HCT116 (cell line): ENCODE measurements at regions of chr7 and their contacts with region 1.

Region 1: DNA sequence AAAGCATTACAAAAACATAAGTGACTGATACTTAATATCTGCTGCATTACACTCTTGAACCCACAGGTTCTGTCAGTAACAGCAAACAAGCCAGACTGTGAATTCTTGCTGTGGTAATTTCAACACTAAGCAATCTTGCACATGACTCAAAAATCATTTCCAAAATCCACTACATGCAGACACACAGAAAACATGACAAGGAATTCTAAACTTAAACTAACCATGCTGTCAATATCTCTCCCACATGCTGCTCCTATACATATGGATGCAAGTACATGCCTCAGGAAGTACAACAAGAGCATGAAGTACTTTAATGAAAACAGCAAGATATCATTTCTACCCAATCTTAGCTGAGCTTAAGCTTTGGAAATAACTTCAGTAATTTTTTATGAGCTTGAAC is 890.2 kb upstream of the KCND2 start:
- DNase-seq: no peak
- ATAC-seq: no peak
- H3K4me3 ChIP-seq: no peak overlapping the region
- H3K27ac ChIP-seq: no peak overlapping the region
- H3K4me1 ChIP-seq: no peaks in the 10 kb centered on the region
- H3K27me3 ChIP-seq: no peaks in the 10 kb centered on the region
- CTCF ChIP-seq: no peak
- POLR2A ChIP-seq: no peak
- RAD21 ChIP-seq: no peak

Region 2: DNA sequence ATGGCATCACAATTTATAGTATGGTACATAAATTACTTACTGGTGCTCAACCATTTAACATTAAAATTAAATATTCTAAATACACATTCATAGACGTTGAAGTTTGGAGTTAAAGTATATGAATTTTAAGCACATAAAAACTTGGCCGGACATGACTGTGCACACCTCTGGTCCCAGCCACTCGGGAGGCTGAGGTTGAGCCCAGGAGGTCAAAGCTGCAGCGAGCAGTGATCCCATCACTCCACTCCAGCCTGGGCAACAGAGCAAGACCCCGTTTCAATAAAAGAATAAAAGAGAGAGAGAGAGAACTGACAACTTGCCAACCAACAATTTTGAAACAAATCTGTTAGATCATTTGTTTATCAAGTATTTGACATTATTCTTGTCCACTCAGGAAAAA is 53.0 kb before region 1 on chr7:
- CTCF ChIA-PET with region 1: no interaction called
- POLR2A ChIA-PET with region 1: no interaction called
- RAD21 ChIA-PET with region 1: no interaction called
- intact Hi-C with region 1: loop called (anchors 5 kb)
- DNase-seq: no peak
- ATAC-seq: no peak
- H3K4me3 ChIP-seq: no peak overlapping the region
- H3K27ac ChIP-seq: no peak overlapping the region
- H3K4me1 ChIP-seq: no peaks in the 10 kb centered on the region
- H3K27me3 ChIP-seq: no peaks in the 10 kb centered on the region
- CTCF ChIP-seq: no peak
- POLR2A ChIP-seq: no peak
- RAD21 ChIP-seq: no peak

Region 3: GRCh38 chr7:119341822-119342221 is 40.9 kb before region 1 on chr7:
- CTCF ChIA-PET with region 1: no interaction called
- POLR2A ChIA-PET with region 1: no interaction called
- RAD21 ChIA-PET with region 1: no interaction called
- intact Hi-C with region 1: no loop called
- DNase-seq: no peak
- ATAC-seq: no peak
- H3K4me3 ChIP-seq: no peak overlapping the region
- H3K27ac ChIP-seq: no peak overlapping the region
- H3K4me1 ChIP-seq: no peaks in the 10 kb centered on the region
- H3K27me3 ChIP-seq: no peaks in the 10 kb centered on the region
- CTCF ChIP-seq: no peak
- POLR2A ChIP-seq: no peak
- RAD21 ChIP-seq: no peak